T-cell (primary cell): ENCODE measurements at regions of chrX and their contacts with region 1.

Region 1: DNA sequence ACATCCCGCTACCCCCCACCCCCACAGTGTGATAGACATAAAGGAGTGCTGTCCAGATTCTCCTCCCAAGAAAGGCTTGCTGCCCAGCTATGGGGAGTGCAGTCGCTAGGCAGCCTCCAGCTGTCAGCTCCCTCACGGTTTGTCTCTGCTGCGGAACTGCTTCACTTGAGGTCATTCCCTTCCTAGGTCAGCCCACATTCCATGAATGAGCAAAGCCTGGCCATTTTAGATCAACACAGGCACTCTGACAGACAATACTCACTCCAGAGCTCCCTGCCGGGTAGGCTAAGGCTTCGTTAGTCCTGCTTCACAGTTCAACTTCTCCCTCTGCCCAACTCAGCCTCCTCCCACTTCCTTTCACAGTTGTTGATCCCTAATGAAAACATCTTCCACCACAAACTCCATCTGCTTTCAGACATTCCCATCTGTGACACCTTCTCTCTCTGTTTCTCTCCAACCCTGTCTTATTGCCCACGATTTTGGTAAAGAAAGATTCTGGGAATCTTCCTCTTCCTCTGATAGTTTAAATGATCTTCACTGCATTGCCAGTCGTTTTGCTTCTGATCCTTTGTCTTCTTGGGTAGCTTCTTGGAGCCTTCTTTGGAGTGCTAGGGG is 318.9 kb upstream of the F9 start:
- DNase-seq: no peak
- ATAC-seq: no peak
- H3K4me3 ChIP-seq: no peak overlapping the region
- H3K4me3 Mint-ChIP-seq: no peak overlapping the region
- H3K27ac ChIP-seq: no peak overlapping the region
- H3K27ac Mint-ChIP-seq: no peak overlapping the region
- H3K4me1 ChIP-seq: no peaks in the 10 kb centered on the region
- H3K4me1 Mint-ChIP-seq: no peaks in the 10 kb centered on the region
- H3K27me3 ChIP-seq: no peaks in the 10 kb centered on the region
- H3K27me3 Mint-ChIP-seq: peaks cover 0 to 50% of the 10 kb centered on the region in 2 donors

Region 2: DNA sequence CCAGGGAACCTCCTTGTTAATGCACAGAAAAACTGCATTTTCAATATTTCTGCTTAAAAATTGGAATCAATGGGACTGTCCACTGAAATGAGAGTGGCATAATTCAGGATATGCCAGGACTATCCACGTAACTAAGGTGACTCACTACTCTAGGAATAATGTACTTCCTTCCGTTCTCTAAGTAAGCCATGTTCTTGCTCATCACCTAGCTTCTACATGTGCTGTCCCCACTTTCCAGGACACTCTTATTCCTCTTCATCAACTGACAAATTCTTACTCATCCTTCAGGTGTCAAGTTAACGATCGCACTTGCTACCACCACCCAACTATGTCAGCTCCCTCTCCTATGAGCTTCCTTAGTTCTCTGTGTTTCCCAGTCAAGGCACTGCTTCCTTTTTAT is 23.9 kb before region 1 on chrX:
- CTCF ChIA-PET with region 1: no interaction called
- POLR2A ChIA-PET with region 1: no interaction called
- DNase-seq: no peak
- ATAC-seq: no peak
- H3K4me3 ChIP-seq: no peak overlapping the region
- H3K4me3 Mint-ChIP-seq: no peak overlapping the region
- H3K27ac ChIP-seq: no peak overlapping the region
- H3K27ac Mint-ChIP-seq: no peak overlapping the region
- H3K4me1 ChIP-seq: no peaks in the 10 kb centered on the region
- H3K4me1 Mint-ChIP-seq: no peaks in the 10 kb centered on the region
- H3K27me3 ChIP-seq: no peaks in the 10 kb centered on the region
- H3K27me3 Mint-ChIP-seq: peaks cover 0 to 39% of the 10 kb centered on the region in 2 donors

Region 3: DNA sequence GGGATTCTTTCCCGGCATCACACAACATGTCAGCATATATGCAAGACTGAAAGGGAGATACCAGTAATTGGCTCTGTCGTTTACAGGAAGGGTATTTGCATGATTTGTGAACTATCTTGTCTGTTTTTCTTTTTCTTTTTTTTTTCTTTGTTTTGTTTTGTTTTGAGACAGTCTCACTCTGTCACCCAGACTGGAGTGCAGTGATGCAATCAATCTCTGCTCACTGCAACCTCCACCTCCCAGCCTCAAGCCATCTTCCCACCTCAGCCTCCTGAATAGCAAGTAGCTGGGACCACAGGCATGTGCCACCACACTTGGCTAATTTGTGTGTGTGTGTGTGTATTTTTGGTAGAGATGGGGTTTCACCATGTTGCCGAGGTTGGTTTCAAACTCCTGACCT is 56.2 kb after region 1 on chrX:
- CTCF ChIA-PET with region 1: no interaction called
- POLR2A ChIA-PET with region 1: no interaction called
- DNase-seq: no peak
- ATAC-seq: no peak
- H3K4me3 ChIP-seq: no peak overlapping the region
- H3K4me3 Mint-ChIP-seq: no peak overlapping the region
- H3K27ac ChIP-seq: no peak overlapping the region
- H3K27ac Mint-ChIP-seq: no peak overlapping the region
- H3K4me1 ChIP-seq: no peaks in the 10 kb centered on the region
- H3K4me1 Mint-ChIP-seq: no peaks in the 10 kb centered on the region
- H3K27me3 ChIP-seq: no peaks in the 10 kb centered on the region
- H3K27me3 Mint-ChIP-seq: peaks cover 0 to 13% of the 10 kb centered on the region in 2 donors

Region 4: GRCh38 chrX:139905041-139905440 is 693.4 kb after region 1 on chrX:
- CTCF ChIA-PET with region 1: interaction called in 1 of 2 experiments, 12 read pairs
- POLR2A ChIA-PET with region 1: no interaction called
- DNase-seq: no peak
- ATAC-seq: no peak
- H3K4me3 ChIP-seq: no peak overlapping the region
- H3K4me3 Mint-ChIP-seq: no peak overlapping the region
- H3K27ac ChIP-seq: no peak overlapping the region
- H3K27ac Mint-ChIP-seq: no peak overlapping the region
- H3K4me1 ChIP-seq: peaks cover 2 to 4% of the 10 kb centered on the region in 2 experiments
- H3K4me1 Mint-ChIP-seq: peaks cover 29 to 39% (median 35%) of the 10 kb centered on the region in 3 donors
- H3K27me3 ChIP-seq: no peaks in the 10 kb centered on the region
- H3K27me3 Mint-ChIP-seq: peaks cover 0 to 10% of the 10 kb centered on the region in 2 donors